ENCODE measurements at regions of chr9 and their contacts with region 1.

Region 1: DNA sequence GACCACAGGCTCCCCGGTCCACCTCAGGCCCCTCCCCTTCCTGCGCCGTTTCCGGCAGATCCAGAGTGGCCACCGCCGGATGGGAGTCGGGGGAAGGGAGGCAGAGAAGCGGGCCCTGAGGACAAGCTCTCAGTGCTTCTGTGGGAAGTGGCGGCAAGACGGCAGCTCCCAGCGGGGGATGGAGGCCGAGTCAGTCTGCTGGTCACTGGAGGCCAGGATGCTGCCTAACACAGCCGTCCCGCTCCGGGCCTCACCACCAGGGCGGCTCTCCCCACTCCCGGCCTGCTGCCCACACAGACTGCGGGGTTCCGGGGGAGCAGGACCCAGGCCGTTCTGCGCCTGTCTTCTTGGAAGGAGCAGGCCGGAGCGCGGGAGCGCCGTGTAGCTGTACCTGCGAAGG is 31.4 kb downstream of the FXN start:
- DNase-seq: no peak
- ATAC-seq: no peak
- H3K4me3 ChIP-seq: no peak overlapping the region
- H3K27ac ChIP-seq: no peak overlapping the region
- H3K4me1 ChIP-seq: peaks cover 0 to 32% (median 5%) of the 10 kb centered on the region in 12 donors
- H3K27me3 ChIP-seq: no peaks in the 10 kb centered on the region
- CTCF ChIP-seq: no peak
- POLR2A ChIP-seq: no peak

Region 2: DNA sequence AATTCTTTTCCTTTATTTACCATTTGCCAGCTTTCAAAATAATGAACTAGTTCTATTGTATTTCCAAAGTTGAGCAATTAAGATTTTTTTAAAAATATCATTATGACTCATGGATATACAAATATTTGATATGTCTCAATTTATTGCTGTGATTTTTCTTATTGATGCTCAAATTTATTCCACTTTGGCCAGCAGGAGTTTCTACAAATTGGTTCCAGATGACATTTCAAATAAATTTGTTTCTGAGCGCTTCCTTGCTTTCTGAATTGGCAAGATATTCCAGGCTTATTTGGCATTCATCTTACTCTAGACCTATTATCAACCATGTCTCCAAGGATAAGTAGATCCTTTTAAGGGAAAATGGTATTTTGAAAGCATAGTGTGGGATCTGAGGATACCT is 48.7 kb after region 1 on chr9:
- intact Hi-C with region 1: loop called in 3 of 10 experiments (anchors 5 to 10 kb)
- DNase-seq: no peak
- ATAC-seq: no peak
- H3K4me3 ChIP-seq: no peak overlapping the region
- H3K27ac ChIP-seq: no peak overlapping the region
- H3K4me1 ChIP-seq: peaks cover 0 to 4% (median under 1%) of the 10 kb centered on the region in 12 donors
- H3K27me3 ChIP-seq: no peaks in the 10 kb centered on the region
- CTCF ChIP-seq: no peak
- POLR2A ChIP-seq: no peak

Region 3: GRCh38 chr9:69121828-69122548 is 55.0 kb after region 1 on chr9:
- intact Hi-C with region 1: loop called in 3 of 10 experiments (anchors 5 to 10 kb)
- DNase-seq: peak; percentile 70 to 84 (median 78)
- ATAC-seq: peak; percentile 82 to 89 (median 84)
- H3K4me3 ChIP-seq: peak overlapping the region; percentile 63 to 87 (median 81)
- H3K27ac ChIP-seq: peak overlapping the region; percentile 70 to 96 (median 90)
- H3K4me1 ChIP-seq: peaks cover 0 to 17% (median 9%) of the 10 kb centered on the region in 12 donors
- H3K27me3 ChIP-seq: no peaks in the 10 kb centered on the region
- CTCF ChIP-seq: peak in 3 of 12 donors; percentile 1 to 32 (median 21)
- POLR2A ChIP-seq: no peak

Region 4: DNA sequence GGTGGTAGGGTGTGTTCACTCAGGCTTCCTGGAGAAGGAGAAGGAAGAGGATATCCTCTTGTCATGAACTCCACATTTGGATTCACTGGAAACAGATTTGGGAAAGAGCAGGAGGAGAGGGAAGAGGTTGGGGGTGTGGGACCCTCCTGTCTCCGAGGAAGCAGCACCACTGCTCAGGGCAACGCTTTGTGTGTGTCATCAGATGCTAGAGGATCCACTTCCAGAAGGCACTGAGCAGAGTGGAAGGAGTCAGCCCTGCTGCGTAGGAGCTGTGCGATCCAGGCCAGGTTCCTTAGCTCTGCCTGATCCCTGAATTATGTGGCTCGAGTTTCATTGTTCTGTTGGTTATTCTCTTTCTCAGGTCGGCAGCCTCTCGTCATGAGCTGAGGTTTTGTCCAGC is 69.8 kb after region 1 on chr9:
- intact Hi-C with region 1: loop called in 3 of 10 experiments (anchors 5 to 10 kb)
- DNase-seq: peak in 1 of 5 donors; percentile 34
- ATAC-seq: peak in 2 of 4 donors; percentile 12 to 61
- H3K4me3 ChIP-seq: no peak overlapping the region
- H3K27ac ChIP-seq: peak overlapping the region in 10 of 12 donors; percentile 25 to 73 (median 53)
- H3K4me1 ChIP-seq: peaks cover 0 to 65% (median 23%) of the 10 kb centered on the region in 12 donors
- H3K27me3 ChIP-seq: no peaks in the 10 kb centered on the region
- CTCF ChIP-seq: no peak
- POLR2A ChIP-seq: no peak

Measured in heart left ventricle (tissue), 16 donors.